Common myeloid progenitor, CD34-positive (primary cell): ENCODE measurements at regions of chr16 and their contacts with region 1.

Region 1: DNA sequence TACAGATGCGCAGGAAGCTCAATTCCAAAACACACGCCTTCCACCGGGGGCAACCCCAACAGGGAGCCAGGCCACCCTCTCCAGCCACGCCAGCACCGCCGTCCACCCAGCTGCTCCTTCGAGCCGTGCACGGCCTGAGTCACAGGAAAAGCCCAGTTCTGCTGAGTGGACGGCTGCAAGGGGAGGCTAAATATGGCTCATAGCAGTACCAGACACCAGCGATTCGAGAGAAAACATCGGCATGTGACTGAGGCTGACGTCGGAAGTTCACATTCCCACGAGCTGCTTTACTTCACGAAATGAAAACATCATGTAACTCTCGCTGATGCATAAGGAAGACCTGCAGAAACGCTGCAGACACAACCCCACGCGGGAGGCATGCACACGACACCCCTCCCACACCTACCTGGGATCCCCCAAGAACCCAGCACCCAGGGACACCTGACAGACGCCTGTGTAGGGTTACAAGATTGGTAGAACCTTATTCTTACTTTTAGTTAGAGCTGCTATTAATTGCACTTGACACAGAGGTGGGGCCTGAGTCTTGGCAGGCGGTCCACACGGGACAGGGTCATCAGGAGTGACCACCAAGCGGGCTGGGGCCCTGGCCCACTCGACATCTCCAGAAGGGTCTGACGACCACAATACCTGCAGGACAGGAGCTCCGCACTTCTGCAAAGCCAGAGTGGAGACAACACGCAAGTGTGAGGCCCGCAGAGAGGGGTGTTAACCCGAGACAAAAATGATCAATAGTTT is 116.8 kb downstream of the ANKRD11 start:
- DNase-seq: no peak
- H3K4me3 ChIP-seq: no peak overlapping the region
- H3K27ac ChIP-seq: no peak overlapping the region
- H3K4me1 ChIP-seq: peaks cover 0 to 5% (median 4%) of the 10 kb centered on the region in 4 experiments
- H3K27me3 ChIP-seq: no peaks in the 10 kb centered on the region

Region 2: GRCh38 chr16:89357055-89357816 is 16.3 kb before region 1 on chr16:
- CTCF ChIA-PET with region 1: interaction called, 14 read pairs
- POLR2A ChIA-PET with region 1: no interaction called
- DNase-seq: peak; percentile 47 to 82 (median 75)
- H3K4me3 ChIP-seq: peak overlapping the region in 2 of 7 experiments; percentile 3 to 7
- H3K27ac ChIP-seq: peak overlapping the region in 1 of 2 experiments; percentile 39
- H3K4me1 ChIP-seq: peaks cover 34 to 73% (median 61%) of the 10 kb centered on the region in 4 experiments
- H3K27me3 ChIP-seq: no peaks in the 10 kb centered on the region